Transverse colon (tissue), 4 donors: ENCODE measurements at regions of chr17 and their contacts with region 1.

Region 1: DNA sequence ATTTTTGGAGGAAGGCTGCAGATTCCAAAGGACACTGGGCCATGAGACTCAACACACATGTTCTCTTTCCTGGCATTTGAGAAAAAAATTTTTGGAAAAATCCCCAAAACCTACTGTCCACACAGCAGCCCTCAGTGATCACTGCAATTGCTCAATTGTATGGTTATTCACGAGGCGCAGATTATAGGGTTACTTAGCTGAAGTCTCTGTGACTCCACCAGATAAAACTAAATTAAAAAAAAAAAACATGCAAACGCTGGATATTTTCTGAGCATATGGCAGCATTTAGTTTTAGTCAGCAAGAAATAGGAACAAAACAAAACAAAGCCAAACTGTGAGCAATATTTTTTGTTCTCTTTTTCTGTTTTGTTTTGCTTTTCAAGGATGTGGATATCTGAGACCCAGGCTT is 83.8 kb upstream of the FAM20A start:
- DNase-seq: no peak
- H3K4me3 ChIP-seq: no peak overlapping the region
- H3K27ac ChIP-seq: peak overlapping the region in 3 of 4 donors; percentile 13 to 37 (median 21)
- H3K4me1 ChIP-seq: no peaks in the 10 kb centered on the region
- H3K27me3 ChIP-seq: no peaks in the 10 kb centered on the region
- CTCF ChIP-seq: no peak
- EP300 ChIP-seq: no peak
- POLR2A ChIP-seq: no peak

Region 2: DNA sequence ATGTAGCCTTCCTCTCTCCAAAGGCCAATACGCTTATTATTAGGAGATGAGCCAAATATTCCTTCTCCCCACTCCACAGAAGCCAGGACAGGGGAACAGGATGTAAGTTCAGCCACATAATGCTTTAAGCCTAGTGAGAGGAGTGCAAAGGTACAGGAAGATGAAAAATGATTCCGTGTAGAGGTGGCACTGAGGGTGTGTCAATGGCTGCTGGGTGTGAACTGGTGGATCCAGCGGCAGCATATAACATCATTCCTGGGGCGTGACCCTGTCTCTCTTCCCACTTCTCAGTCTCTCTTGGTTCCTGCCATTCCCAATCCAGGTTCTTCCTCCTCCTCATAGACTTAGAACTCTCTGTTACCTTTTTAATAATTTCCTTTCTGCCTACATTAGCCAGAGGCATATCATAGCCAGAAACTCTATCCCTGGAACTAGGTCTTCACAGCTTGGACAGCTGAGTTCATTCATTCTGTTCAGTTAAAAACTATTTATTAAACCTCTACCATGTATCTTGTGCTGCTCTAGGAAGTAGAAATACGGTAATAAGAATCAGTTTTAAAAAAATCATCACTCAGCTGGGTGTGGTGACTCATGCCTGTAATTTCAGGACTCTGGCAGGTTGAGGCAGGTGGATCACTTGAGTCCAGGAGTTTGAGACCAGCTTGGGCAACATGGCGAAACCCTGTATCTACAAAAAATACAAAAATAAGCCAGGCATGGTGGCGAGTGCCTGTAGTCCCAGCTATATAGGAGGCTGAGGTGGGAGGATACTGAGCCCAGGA is 25.8 kb before region 1 on chr17:
- in situ Hi-C with region 1: no loop called
- intact Hi-C with region 1: loop called (anchors 1 kb)
- DNase-seq: no peak
- H3K4me3 ChIP-seq: no peak overlapping the region
- H3K27ac ChIP-seq: no peak overlapping the region
- H3K4me1 ChIP-seq: no peaks in the 10 kb centered on the region
- H3K27me3 ChIP-seq: no peaks in the 10 kb centered on the region
- CTCF ChIP-seq: no peak
- EP300 ChIP-seq: no peak
- POLR2A ChIP-seq: no peak

Region 3: GRCh38 chr17:68749349-68750207 is 64.6 kb after region 1 on chr17:
- in situ Hi-C with region 1: no loop called
- intact Hi-C with region 1: no loop called
- DNase-seq: no peak
- H3K4me3 ChIP-seq: no peak overlapping the region
- H3K27ac ChIP-seq: peak overlapping the region in 1 of 4 donors; percentile 24
- H3K4me1 ChIP-seq: no peaks in the 10 kb centered on the region
- H3K27me3 ChIP-seq: no peaks in the 10 kb centered on the region
- CTCF ChIP-seq: no peak
- EP300 ChIP-seq: no peak
- POLR2A ChIP-seq: no peak